ENCODE measurements at regions of chr2 and their contacts with region 1.

Region 1: GRCh38 chr2:54429811-54430551 is 26.1 kb upstream of the SPTBN1 start:
- DNase-seq: no peak

Region 2: DNA sequence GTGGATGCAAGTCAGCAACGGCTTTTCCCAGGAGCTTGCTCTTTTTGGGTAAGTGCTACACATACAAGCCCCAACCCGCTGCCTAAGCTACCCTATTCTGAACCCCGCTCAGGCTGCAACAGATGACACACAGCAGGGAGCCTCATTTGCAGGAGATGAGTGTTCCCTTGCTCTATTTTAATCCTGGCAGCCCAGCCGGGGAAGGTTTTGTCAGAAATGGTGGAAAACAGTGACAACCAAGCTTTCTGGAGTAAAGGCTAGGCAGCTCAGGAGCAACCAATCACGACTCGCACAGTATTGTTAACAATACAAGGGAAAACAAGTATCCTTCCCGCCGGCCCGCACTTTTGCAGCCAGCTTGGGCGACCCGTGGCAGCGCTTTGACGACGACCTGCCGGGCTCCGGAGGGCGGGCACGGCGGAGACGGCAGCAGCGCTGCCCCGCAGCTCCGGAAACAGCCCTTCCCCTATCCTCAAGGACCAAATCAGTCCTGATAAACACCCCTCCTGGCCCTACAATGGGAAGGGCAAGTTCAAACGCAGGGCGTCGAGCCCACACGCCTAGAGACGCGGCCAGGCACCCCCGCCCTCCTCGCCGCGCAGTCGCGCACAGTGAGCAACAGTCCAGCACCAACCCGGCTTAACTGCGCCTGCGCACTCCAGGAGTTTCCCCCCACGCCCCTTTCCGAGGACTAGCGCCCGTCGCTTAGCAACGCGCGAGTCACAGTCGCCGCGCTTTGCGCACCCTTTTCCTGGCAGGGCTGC is 99.6 kb before region 1 on chr2:
- intact Hi-C with region 1: loop called in 1 of 2 experiments (anchors 10 kb)
- DNase-seq: peak; percentile 99

Region 3: GRCh38 chr2:54370405-54371104 is 59.4 kb before region 1 on chr2:
- intact Hi-C with region 1: loop called in 1 of 2 experiments (anchors 10 kb)
- DNase-seq: no peak

Region 4: GRCh38 chr2:54723131-54723995 is 293.4 kb after region 1 on chr2 and contains the start of gene EML6:
- intact Hi-C with region 1: no loop called
- DNase-seq: peak; percentile 99
- total RNA-seq, gene EML6: 3.2 to 12.1 TPM

Measured in posterior vena cava (tissue), 2 donors.